ENCODE measurements at regions of chr1 and their contacts with region 1.

Region 1: DNA sequence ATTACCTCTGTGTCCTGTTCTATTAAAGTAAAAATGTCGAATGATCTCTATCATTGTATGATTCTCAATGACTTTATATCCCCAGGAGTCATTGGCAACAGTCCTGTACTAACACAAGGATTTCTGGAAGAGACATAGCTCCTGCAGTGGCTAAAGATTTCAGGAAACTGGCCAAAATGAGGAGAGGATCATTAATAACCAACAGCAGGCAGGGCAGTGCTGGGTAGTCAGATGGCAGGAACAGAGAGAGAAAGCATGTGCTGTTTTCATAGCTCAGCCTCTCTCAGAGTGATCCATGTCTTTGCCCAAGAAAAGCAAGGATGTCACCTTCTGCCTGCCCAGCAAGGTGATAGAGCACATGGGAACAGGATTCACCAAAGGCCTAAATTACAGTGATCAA is 604.7 kb upstream of the PLXNA2 start:
- DNase-seq: no peak
- ATAC-seq: no peak
- H3K4me3 ChIP-seq: no peak overlapping the region
- H3K27ac ChIP-seq: no peak overlapping the region
- H3K4me1 ChIP-seq: no peaks in the 10 kb centered on the region
- H3K27me3 ChIP-seq: no peaks in the 10 kb centered on the region
- CTCF ChIP-seq: no peak
- EP300 ChIP-seq: no peak
- POLR2A ChIP-seq: no peak
- RAD21 ChIP-seq: no peak

Region 2: GRCh38 chr1:208717525-208717924 is 131.3 kb before region 1 on chr1:
- CTCF ChIA-PET with region 1: no interaction called
- POLR2A ChIA-PET with region 1: no interaction called
- in situ Hi-C with region 1: no loop called
- intact Hi-C with region 1: no loop called
- DNase-seq: no peak
- ATAC-seq: no peak
- H3K4me3 ChIP-seq: no peak overlapping the region
- H3K27ac ChIP-seq: no peak overlapping the region
- H3K4me1 ChIP-seq: no peaks in the 10 kb centered on the region
- H3K27me3 ChIP-seq: no peaks in the 10 kb centered on the region
- CTCF ChIP-seq: no peak
- EP300 ChIP-seq: no peak
- POLR2A ChIP-seq: no peak
- RAD21 ChIP-seq: no peak

Region 3: DNA sequence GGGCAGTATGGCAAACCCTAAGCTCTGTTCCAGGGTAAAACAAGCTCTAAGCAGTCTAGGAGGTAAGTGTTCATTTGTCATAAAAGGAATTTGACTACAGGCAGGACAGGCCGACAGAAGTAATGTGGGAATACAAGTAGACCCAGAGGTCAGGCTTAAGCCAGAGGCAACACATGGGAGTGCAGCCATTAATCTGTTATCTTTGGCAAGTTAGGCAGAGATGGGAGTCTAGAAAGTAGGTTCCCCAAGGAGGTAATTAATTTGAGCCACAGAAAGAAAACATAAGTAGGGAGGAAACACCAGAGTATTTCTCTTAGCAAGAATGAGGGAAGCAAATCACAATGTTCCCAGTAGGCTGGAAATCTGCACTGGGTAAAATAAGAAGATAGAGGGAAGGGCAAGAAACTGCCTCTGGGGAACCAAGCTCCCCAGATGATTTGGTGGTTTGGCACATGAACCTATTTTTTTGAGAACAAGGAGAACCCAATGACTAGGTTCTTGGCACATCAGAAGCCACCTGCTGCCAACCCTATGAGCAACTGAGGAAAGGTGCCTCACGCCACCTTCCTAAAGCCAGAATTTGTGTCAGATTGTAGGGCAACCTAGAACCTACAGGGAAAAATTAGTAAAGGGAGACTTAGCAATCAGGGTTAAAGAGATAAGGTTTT is 31.7 kb after region 1 on chr1:
- CTCF ChIA-PET with region 1: no interaction called
- POLR2A ChIA-PET with region 1: no interaction called
- in situ Hi-C with region 1: no loop called
- intact Hi-C with region 1: loop called (anchors 1 kb)
- DNase-seq: no peak
- ATAC-seq: no peak
- H3K4me3 ChIP-seq: no peak overlapping the region
- H3K27ac ChIP-seq: no peak overlapping the region
- H3K4me1 ChIP-seq: no peaks in the 10 kb centered on the region
- H3K27me3 ChIP-seq: no peaks in the 10 kb centered on the region; a peak in 1 of 5 replicates
- CTCF ChIP-seq: no peak
- EP300 ChIP-seq: no peak
- POLR2A ChIP-seq: no peak
- RAD21 ChIP-seq: no peak

Measured in HepG2 (cell line).